CD4-positive, alpha-beta T cell (primary cell): ENCODE measurements at regions of chr5 and their contacts with region 1.

Region 1: GRCh38 chr5:126354012-126354857 is 69.0 kb upstream of the GRAMD2B start:
- DNase-seq: peak in 3 of 14 experiments; percentile 57 to 70 (median 68)
- ATAC-seq: peak; percentile 74
- H3K4me3 ChIP-seq: no peak overlapping the region
- H3K4me3 Mint-ChIP-seq: peak overlapping the region; percentile 13
- H3K27ac ChIP-seq: no peak overlapping the region
- H3K27ac Mint-ChIP-seq: no peak overlapping the region
- H3K4me1 ChIP-seq: peaks cover 7% of the 10 kb centered on the region
- H3K4me1 Mint-ChIP-seq: peaks cover 16% of the 10 kb centered on the region
- H3K27me3 ChIP-seq: no peaks in the 10 kb centered on the region
- H3K27me3 Mint-ChIP-seq: peaks cover 4% of the 10 kb centered on the region
- CTCF ChIP-seq: peak; percentile 78

Region 2: GRCh38 chr5:126490167-126490940 is 136.1 kb after region 1 on chr5:
- CTCF ChIA-PET with region 1: interaction called, 3 read pairs
- POLR2A ChIA-PET with region 1: no interaction called
- intact Hi-C with region 1: loop called in 1 of 2 experiments (anchors 5 kb)
- DNase-seq: no peak
- ATAC-seq: no peak
- H3K4me3 ChIP-seq: no peak overlapping the region
- H3K4me3 Mint-ChIP-seq: no peak overlapping the region
- H3K27ac ChIP-seq: no peak overlapping the region
- H3K27ac Mint-ChIP-seq: peak overlapping the region; percentile 12
- H3K4me1 ChIP-seq: no peaks in the 10 kb centered on the region
- H3K4me1 Mint-ChIP-seq: no peaks in the 10 kb centered on the region
- H3K27me3 ChIP-seq: no peaks in the 10 kb centered on the region
- H3K27me3 Mint-ChIP-seq: no peaks in the 10 kb centered on the region
- CTCF ChIP-seq: no peak

Region 3: DNA sequence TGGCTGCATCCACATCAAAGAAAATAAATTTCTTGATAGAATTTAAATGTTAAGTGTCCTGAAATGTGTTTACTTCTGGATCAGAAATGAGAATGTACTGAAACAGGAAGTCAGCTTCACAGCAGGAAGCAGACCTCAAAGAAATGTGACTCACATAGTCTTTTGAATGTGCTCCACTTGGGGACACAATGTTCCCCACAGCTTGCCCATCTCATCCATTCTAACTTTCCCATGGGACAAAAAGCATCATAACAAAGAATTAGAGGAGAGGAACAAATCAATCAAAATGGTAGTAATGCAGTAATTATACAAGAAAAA is 154.7 kb after region 1 on chr5:
- CTCF ChIA-PET with region 1: no interaction called
- POLR2A ChIA-PET with region 1: no interaction called
- intact Hi-C with region 1: no loop called
- DNase-seq: peak in 4 of 14 experiments; percentile 28 to 64 (median 55)
- ATAC-seq: peak; percentile 90
- H3K4me3 ChIP-seq: peak overlapping the region; percentile 29
- H3K4me3 Mint-ChIP-seq: peak overlapping the region; percentile 85
- H3K27ac ChIP-seq: peak overlapping the region in 1 of 2 donors; percentile 11
- H3K27ac Mint-ChIP-seq: peak overlapping the region; percentile 92
- H3K4me1 ChIP-seq: peaks cover 23% of the 10 kb centered on the region
- H3K4me1 Mint-ChIP-seq: peaks cover 50% of the 10 kb centered on the region
- H3K27me3 ChIP-seq: no peaks in the 10 kb centered on the region
- H3K27me3 Mint-ChIP-seq: no peaks in the 10 kb centered on the region
- CTCF ChIP-seq: no peak

Region 4: DNA sequence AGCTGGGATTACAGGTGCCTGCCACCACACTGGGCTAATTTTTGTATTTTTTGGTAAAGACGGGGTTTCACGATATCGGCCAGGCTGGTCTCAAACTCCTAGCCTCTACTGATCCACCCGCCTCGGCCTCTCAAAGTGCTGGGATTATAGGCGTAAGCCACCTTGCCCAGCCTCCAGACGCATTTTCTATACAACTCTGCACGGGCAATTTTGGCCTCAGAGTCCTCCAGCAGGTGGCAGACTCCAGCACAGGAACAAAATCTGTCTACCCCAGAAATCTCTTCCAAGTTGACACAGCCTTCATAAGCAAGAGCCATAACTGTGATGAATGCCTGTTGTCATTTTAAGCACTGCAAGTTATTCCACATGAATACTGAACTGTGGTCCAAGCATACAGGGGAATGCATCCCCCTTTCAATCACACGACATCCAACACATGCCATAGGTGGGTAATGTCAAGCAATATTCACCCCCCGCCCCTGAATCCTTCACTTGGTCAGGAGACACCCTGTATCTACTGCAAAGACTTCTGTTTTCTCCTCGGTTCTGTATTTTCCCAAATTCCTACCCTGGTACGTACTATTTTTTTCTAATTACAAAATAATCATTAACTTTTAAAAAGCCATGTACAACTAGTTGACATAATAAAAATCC is 190.0 kb after region 1 on chr5:
- CTCF ChIA-PET with region 1: interaction called, 3 read pairs
- POLR2A ChIA-PET with region 1: no interaction called
- intact Hi-C with region 1: loop called (anchors 1 kb)
- DNase-seq: peak in 10 of 14 experiments; percentile 3 to 46 (median 20)
- ATAC-seq: peak; percentile 49
- H3K4me3 ChIP-seq: no peak overlapping the region
- H3K4me3 Mint-ChIP-seq: no peak overlapping the region
- H3K27ac ChIP-seq: no peak overlapping the region
- H3K27ac Mint-ChIP-seq: no peak overlapping the region
- H3K4me1 ChIP-seq: no peaks in the 10 kb centered on the region
- H3K4me1 Mint-ChIP-seq: peaks cover 2% of the 10 kb centered on the region
- H3K27me3 ChIP-seq: no peaks in the 10 kb centered on the region
- H3K27me3 Mint-ChIP-seq: no peaks in the 10 kb centered on the region
- CTCF ChIP-seq: no peak

Region 5: GRCh38 chr5:127079994-127080491 is 725.8 kb after region 1 on chr5:
- CTCF ChIA-PET with region 1: no interaction called
- POLR2A ChIA-PET with region 1: no interaction called
- intact Hi-C with region 1: no loop called
- DNase-seq: no peak
- ATAC-seq: no peak
- H3K4me3 ChIP-seq: no peak overlapping the region
- H3K4me3 Mint-ChIP-seq: no peak overlapping the region
- H3K27ac ChIP-seq: no peak overlapping the region
- H3K27ac Mint-ChIP-seq: no peak overlapping the region
- H3K4me1 ChIP-seq: no peaks in the 10 kb centered on the region
- H3K4me1 Mint-ChIP-seq: no peaks in the 10 kb centered on the region
- H3K27me3 ChIP-seq: no peaks in the 10 kb centered on the region
- H3K27me3 Mint-ChIP-seq: peaks cover 7% of the 10 kb centered on the region
- CTCF ChIP-seq: no peak